ENCODE measurements at regions of chr2 and their contacts with region 1.

Region 1: GRCh38 chr2:130160131-130160530 is 15.2 kb upstream of the CCDC74B start:
- DNase-seq: peak in 1 of 6 donors; percentile 28
- ATAC-seq: no peak
- H3K4me3 ChIP-seq: no peak overlapping the region
- H3K27ac ChIP-seq: no peak overlapping the region
- H3K4me1 ChIP-seq: no peaks in the 10 kb centered on the region
- H3K27me3 ChIP-seq: no peaks in the 10 kb centered on the region
- CTCF ChIP-seq: no peak

Region 2: GRCh38 chr2:130332271-130333073 is 172.3 kb after region 1 on chr2:
- intact Hi-C with region 1: loop called in 1 of 3 experiments (anchors 10 kb)
- DNase-seq: peak in 4 of 6 donors; percentile 57 to 86 (median 68)
- ATAC-seq: peak; percentile 55 to 84 (median 78)
- H3K4me3 ChIP-seq: peak overlapping the region in 1 of 4 donors; percentile 8
- H3K27ac ChIP-seq: no peak overlapping the region
- H3K4me1 ChIP-seq: no peaks in the 10 kb centered on the region
- H3K27me3 ChIP-seq: peaks cover 0 to 9% (median 2%) of the 10 kb centered on the region in 4 donors
- CTCF ChIP-seq: peak; percentile 79 to 93 (median 90)

Measured in pancreas (tissue), 10 donors.